Gastrocnemius medialis (tissue), 4 donors: ENCODE measurements at regions of chr3 and their contacts with region 1.

Region 1: DNA sequence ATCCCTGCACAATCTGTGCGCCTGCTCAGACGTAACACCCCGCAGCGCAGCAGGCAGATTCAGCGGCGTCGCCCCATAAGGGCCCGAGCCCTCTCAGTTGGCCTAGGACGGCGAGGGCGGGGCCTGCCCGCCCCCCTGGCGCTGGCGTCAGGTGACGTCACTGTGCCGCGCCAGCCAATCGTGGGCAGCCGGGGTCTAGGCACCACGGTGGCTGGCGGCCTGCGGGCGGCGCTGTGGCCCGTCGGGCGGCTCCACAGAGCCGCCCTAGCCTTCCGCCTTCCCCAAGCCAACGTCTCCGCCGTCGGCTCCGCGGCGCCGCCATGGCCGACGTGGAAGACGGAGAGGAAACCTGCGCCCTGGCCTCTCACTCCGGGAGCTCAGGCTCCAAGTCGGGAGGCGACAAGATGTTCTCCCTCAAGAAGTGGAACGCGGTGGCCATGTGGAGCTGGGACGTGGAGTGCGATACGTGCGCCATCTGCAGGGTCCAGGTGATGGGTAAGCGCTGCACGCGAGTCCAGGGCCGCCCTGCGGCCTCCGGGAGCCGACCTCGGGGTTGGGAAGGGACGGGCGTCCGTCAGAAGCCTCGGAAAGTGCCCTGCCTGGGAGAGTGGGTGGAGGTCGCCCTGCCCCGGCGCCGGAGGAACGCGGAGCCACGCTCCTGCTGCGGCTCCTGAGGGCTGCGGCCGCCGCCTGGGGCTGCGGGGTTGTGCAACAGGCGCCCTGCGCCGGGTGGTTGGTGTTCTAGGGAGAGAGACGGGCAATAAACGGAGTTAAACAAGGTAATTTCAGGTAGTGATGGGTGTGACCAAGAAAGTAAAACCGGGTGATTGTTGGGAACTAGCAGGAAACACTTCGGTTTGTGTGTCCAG is at the start of gene RNF7:
- DNase-seq: peak; percentile 84 to 94
- ATAC-seq: peak; percentile 90 to 93
- H3K4me3 ChIP-seq: peak within 1 kb of the TSS; percentile 87 to 97 (median 92)
- H3K27ac ChIP-seq: peak within 1 kb of the TSS; percentile 90 to 96 (median 92)
- H3K4me1 ChIP-seq: peaks cover 36 to 37% of the 10 kb centered on the region in 2 donors
- H3K27me3 ChIP-seq: no peaks in the 10 kb centered on the region
- CTCF ChIP-seq: peak; percentile 80 to 96 (median 95)
- POLR2A ChIP-seq: peak; percentile 78 to 79
- total RNA-seq, gene RNF7: 92.1 to 113 (median 106) TPM

Region 2: GRCh38 chr3:141370065-141370533 is 368.2 kb before region 1 on chr3:
- in situ Hi-C with region 1: loop called in 1 of 4 experiments (anchors 25 kb)
- intact Hi-C with region 1: no loop called
- DNase-seq: peak; percentile 45 to 68
- ATAC-seq: peak; percentile 71 to 80
- H3K4me3 ChIP-seq: peak overlapping the region; percentile 8 to 48 (median 44)
- H3K27ac ChIP-seq: peak overlapping the region; percentile 88 to 96 (median 94)
- H3K4me1 ChIP-seq: peaks cover 27 to 55% of the 10 kb centered on the region in 2 donors
- H3K27me3 ChIP-seq: no peaks in the 10 kb centered on the region
- CTCF ChIP-seq: peak in 2 of 5 experiments; percentile 21 to 30
- POLR2A ChIP-seq: peak; percentile 50 to 65

Region 3: GRCh38 chr3:141575879-141576743 is 162.1 kb before region 1 on chr3:
- in situ Hi-C with region 1: no loop called
- intact Hi-C with region 1: loop called (anchors 5 kb)
- DNase-seq: no peak
- ATAC-seq: no peak
- H3K4me3 ChIP-seq: no peak overlapping the region
- H3K27ac ChIP-seq: no peak overlapping the region
- H3K4me1 ChIP-seq: no peaks in the 10 kb centered on the region
- H3K27me3 ChIP-seq: no peaks in the 10 kb centered on the region
- CTCF ChIP-seq: peak in 2 of 5 experiments; percentile 34 to 41
- POLR2A ChIP-seq: no peak

Region 4: DNA sequence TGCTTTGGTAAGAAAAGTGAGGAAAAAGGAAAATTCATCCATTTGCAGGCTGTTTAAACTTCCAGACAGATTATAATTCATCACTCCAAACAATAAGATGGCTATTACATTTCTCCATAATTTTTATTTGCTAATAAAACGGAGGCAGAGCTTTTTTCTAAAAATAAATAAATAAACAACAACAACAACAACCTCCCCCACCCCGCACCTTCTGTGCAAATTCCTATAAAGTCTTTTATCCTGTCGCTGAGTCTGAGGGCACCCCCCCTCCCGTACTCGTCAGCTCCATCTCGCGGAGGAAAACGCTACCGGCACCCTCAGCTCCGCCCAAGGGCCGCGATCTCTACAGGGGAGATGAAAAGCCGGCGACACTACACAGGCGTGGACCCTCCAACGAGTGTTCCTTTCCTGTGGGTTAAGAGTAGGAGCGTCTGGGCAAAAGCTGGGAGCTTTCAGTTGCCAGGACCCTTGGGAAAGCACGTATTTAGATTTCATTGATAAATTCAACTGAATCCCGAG is 137.2 kb after region 1 on chr3:
- in situ Hi-C with region 1: loop called in 2 of 4 experiments (anchors 10 kb)
- intact Hi-C with region 1: loop called (anchors 1 kb)
- DNase-seq: peak; percentile 70 to 72
- ATAC-seq: peak; percentile 79 to 80
- H3K4me3 ChIP-seq: peak overlapping the region; percentile 82 to 99 (median 86)
- H3K27ac ChIP-seq: peak overlapping the region; percentile 96 to 100 (median 98)
- H3K4me1 ChIP-seq: peaks cover 19 to 23% of the 10 kb centered on the region in 2 donors
- H3K27me3 ChIP-seq: no peaks in the 10 kb centered on the region
- CTCF ChIP-seq: peak; percentile 65 to 91 (median 84)
- POLR2A ChIP-seq: no peak

Region 5: GRCh38 chr3:142148792-142149672 is 410.8 kb after region 1 on chr3 and contains the start of gene TFDP2:
- in situ Hi-C with region 1: no loop called
- intact Hi-C with region 1: loop called (anchors 1 kb)
- DNase-seq: peak; percentile 87 to 88
- ATAC-seq: peak; percentile 90 to 95
- H3K4me3 ChIP-seq: peak within 1 kb of the TSS; percentile 68 to 87 (median 83)
- H3K27ac ChIP-seq: peak within 1 kb of the TSS; percentile 76 to 89 (median 87)
- H3K4me1 ChIP-seq: peaks cover 15 to 26% of the 10 kb centered on the region in 2 donors
- H3K27me3 ChIP-seq: no peaks in the 10 kb centered on the region
- CTCF ChIP-seq: no peak
- POLR2A ChIP-seq: peak; percentile 57 to 89
- total RNA-seq, gene TFDP2: 43.0 to 125 (median 52.4) TPM

Region 6: DNA sequence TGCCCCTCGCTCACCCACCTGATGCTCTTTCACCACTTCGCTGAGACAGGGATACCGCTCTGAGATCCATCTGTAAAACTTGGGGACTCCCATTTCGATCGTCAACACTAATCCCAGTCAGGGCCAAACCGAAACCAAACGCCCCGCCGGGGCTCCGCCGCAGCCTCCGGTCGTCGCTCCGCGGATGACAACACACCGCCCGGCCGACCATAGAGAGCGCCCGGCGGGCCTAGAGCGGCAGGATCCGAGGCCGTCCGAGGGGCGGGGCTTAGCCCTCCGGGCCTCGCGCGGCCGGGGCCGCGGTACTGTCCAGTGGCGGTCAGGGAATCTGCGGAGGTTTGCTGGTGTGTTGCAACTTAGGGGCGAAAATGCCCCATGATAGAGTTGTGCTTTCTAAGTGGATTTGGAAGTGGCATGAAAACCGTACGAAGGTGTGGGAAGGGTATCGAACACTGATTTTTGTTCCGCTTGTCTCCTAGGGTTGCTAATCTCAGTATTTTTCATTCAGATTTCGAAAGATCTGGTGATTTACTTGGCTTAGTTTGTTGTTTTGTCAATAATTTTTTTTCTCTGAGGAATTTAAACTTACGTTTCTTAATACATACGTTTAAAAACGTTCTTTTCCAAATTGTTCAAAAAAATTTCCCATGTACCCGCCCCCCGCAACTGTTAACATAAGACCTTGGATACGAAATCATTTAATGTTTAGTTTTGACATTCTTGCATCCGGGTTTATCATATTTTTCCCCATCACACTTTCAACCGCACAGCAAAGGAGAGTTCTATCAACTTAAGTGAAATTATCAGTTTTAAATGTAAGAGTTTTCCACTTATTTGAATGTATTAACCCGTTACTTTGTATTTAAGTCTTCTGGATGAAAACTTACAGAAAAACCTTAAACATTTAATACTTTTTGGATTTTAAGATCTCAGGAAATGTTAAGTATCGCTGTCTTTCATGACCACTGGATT is 709.9 kb after region 1 on chr3 and contains the start of gene XRN1:
- in situ Hi-C with region 1: no loop called
- intact Hi-C with region 1: loop called (anchors 5 kb)
- DNase-seq: peak; percentile 86 to 95
- ATAC-seq: peak; percentile 92
- H3K4me3 ChIP-seq: peak within 1 kb of the TSS; percentile 91 to 98 (median 94)
- H3K27ac ChIP-seq: peak within 1 kb of the TSS; percentile 96 to 100 (median 99)
- H3K4me1 ChIP-seq: peaks cover 28 to 34% of the 10 kb centered on the region in 2 donors
- H3K27me3 ChIP-seq: no peaks in the 10 kb centered on the region
- CTCF ChIP-seq: no peak
- POLR2A ChIP-seq: peak; percentile 66 to 80
- total RNA-seq, gene XRN1: 41.8 to 52.2 (median 47.3) TPM